Activated CD4-positive, alpha-beta memory T cell treated with anti-CD3 and anti-CD28 coated beads for 36 hours (primary cell): ENCODE measurements at regions of chr7 and their contacts with region 1.

Region 1: GRCh38 chr7:29239638-29240037 is 45.1 kb downstream of the CHN2 start:
- DNase-seq: peak; percentile 42
- H3K4me3 Mint-ChIP-seq: no peak overlapping the region
- H3K27ac Mint-ChIP-seq: no peak overlapping the region
- H3K4me1 Mint-ChIP-seq: peaks cover 16% of the 10 kb centered on the region
- H3K27me3 Mint-ChIP-seq: peaks cover 5% of the 10 kb centered on the region

Region 2: GRCh38 chr7:28955718-28956619 is 283.7 kb before region 1 on chr7:
- CTCF ChIA-PET with region 1: no interaction called
- POLR2A ChIA-PET with region 1: no interaction called
- intact Hi-C with region 1: no loop called
- DNase-seq: peak; percentile 47
- H3K4me3 Mint-ChIP-seq: peak overlapping the region; percentile 20
- H3K27ac Mint-ChIP-seq: no peak overlapping the region
- H3K4me1 Mint-ChIP-seq: peaks cover 9% of the 10 kb centered on the region
- H3K27me3 Mint-ChIP-seq: peaks cover 65% of the 10 kb centered on the region

Region 3: DNA sequence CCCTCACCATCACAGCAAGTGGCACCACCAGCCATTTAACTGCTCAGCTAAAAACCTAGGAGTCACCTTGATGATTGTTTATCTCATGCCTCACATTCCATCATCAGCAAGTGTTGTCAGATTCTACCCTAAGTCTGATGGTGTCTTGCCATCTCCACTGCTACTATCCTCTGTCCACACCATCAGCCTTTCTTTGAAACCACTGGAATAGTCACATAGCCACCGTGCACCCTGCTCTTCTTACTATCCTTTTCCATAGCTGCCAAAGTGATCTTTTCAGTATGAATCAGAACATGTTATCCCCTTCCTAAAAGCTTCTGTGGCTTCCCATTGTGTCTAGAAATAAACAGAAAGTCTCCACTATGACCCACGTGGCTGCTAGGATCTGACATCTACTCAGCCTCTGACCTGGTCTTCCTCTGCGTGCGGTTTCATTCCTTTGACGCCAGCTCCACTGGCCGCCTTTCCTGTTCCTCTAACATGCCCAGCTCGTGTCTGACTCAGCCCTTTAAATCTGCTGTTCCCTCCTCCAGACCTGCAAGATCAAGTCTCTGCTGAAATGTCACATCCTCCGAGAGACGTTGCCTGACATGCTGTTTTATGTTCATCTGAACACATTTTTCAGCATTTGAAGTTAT is 61.6 kb before region 1 on chr7:
- CTCF ChIA-PET with region 1: no interaction called
- POLR2A ChIA-PET with region 1: no interaction called
- intact Hi-C with region 1: loop called (anchors 1 kb)
- DNase-seq: peak; percentile 62
- H3K4me3 Mint-ChIP-seq: no peak overlapping the region
- H3K27ac Mint-ChIP-seq: no peak overlapping the region
- H3K4me1 Mint-ChIP-seq: peaks cover 6% of the 10 kb centered on the region
- H3K27me3 Mint-ChIP-seq: peaks cover 2% of the 10 kb centered on the region

Region 4: GRCh38 chr7:29265208-29265923 is 25.7 kb after region 1 on chr7:
- CTCF ChIA-PET with region 1: no interaction called
- POLR2A ChIA-PET with region 1: no interaction called
- intact Hi-C with region 1: loop called (anchors 1 kb)
- DNase-seq: peak; percentile 19
- H3K4me3 Mint-ChIP-seq: no peak overlapping the region
- H3K27ac Mint-ChIP-seq: no peak overlapping the region
- H3K4me1 Mint-ChIP-seq: peaks cover 10% of the 10 kb centered on the region
- H3K27me3 Mint-ChIP-seq: peaks cover 1% of the 10 kb centered on the region

Region 5: DNA sequence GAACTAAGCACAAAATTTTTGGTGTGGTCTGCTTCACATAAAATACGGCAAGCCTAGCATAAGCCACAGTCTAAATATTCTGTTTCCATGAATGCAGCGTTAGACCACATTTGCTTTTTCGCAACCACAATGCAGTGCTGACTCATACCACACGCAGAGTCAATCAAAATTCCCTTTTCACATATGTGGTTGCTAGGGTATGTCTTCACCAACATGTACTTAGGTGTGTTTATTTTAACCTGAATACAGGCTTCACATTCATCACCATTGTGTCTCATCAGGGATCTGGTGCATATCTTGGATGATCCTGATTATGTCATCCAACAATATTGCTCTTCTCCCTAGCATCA is 45.8 kb after region 1 on chr7:
- CTCF ChIA-PET with region 1: interaction called, 3 read pairs
- POLR2A ChIA-PET with region 1: no interaction called
- intact Hi-C with region 1: loop called (anchors 1 kb)
- DNase-seq: peak; percentile 68
- H3K4me3 Mint-ChIP-seq: no peak overlapping the region
- H3K27ac Mint-ChIP-seq: no peak overlapping the region
- H3K4me1 Mint-ChIP-seq: peaks cover 29% of the 10 kb centered on the region
- H3K27me3 Mint-ChIP-seq: peaks cover 15% of the 10 kb centered on the region

Region 6: GRCh38 chr7:29397398-29397797 is 157.8 kb after region 1 on chr7:
- CTCF ChIA-PET with region 1: no interaction called
- POLR2A ChIA-PET with region 1: no interaction called
- intact Hi-C with region 1: no loop called
- DNase-seq: no peak
- H3K4me3 Mint-ChIP-seq: no peak overlapping the region
- H3K27ac Mint-ChIP-seq: no peak overlapping the region
- H3K4me1 Mint-ChIP-seq: no peaks in the 10 kb centered on the region
- H3K27me3 Mint-ChIP-seq: no peaks in the 10 kb centered on the region

Region 7: GRCh38 chr7:29408841-29409243 is 169.2 kb after region 1 on chr7:
- CTCF ChIA-PET with region 1: interaction called, 4 read pairs
- POLR2A ChIA-PET with region 1: no interaction called
- intact Hi-C with region 1: loop called (anchors 5 kb)
- DNase-seq: peak; percentile 41
- H3K4me3 Mint-ChIP-seq: no peak overlapping the region
- H3K27ac Mint-ChIP-seq: no peak overlapping the region
- H3K4me1 Mint-ChIP-seq: no peaks in the 10 kb centered on the region
- H3K27me3 Mint-ChIP-seq: peaks cover 3% of the 10 kb centered on the region